ENCODE measurements at regions of chr12 and their contacts with region 1.

Region 1: DNA sequence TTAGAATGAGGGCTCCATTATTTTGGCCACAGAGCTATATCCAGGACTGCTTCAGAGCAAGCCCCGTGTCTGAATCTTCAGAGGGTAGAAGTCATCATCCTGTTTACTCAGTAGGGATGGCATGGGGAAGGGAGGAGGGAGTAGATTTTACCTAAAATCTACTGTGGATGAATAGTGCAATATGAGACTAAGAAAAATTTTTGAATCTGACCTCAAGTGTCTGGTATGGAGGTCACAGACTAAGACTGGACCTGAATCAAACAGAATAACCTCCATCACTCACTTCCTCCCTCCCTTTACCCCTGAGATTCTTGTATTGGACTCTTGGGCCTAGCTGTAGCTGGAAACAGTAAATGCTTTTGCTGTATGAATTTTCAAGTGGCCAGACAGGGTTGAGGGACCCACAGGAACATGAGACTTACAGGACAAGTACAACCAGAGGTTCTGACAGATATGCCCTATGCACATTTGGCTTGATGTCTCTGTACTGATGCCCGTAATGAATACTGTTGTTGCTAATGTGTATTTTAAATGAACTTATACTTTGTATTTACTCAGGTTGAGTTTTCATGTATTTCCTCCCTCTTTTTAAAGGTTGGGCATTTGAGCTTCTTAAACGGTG is 78.5 kb downstream of the CCDC91 start:
- DNase-seq: no peak
- H3K4me3 ChIP-seq: no peak overlapping the region
- H3K27ac ChIP-seq: no peak overlapping the region
- H3K4me1 ChIP-seq: peaks cover 0 to 12% (median 0%) of the 10 kb centered on the region in 4 donors
- H3K27me3 ChIP-seq: no peaks in the 10 kb centered on the region
- CTCF ChIP-seq: no peak
- EP300 ChIP-seq: no peak
- POLR2A ChIP-seq: no peak

Region 2: GRCh38 chr12:28190321-28191050 is 78.2 kb before region 1 on chr12 and contains the start of gene CCDC91:
- intact Hi-C with region 1: loop called (anchors 5 kb)
- DNase-seq: peak; percentile 94
- H3K4me3 ChIP-seq: peak within 1 kb of the TSS; percentile 79 to 85 (median 82)
- H3K27ac ChIP-seq: peak within 1 kb of the TSS; percentile 96 to 99 (median 98)
- H3K4me1 ChIP-seq: peaks cover 0 to 15% (median 10%) of the 10 kb centered on the region in 4 donors
- H3K27me3 ChIP-seq: no peaks in the 10 kb centered on the region
- CTCF ChIP-seq: no peak
- EP300 ChIP-seq: peak in 3 of 4 donors; percentile 48 to 73 (median 62)
- POLR2A ChIP-seq: no peak
- total RNA-seq, gene CCDC91: 42.9 to 85.7 (median 61.7) TPM

Measured in sigmoid colon (tissue), 7 donors.